ENCODE measurements at regions of chr22 and their contacts with region 1.

Region 1: GRCh38 chr22:23716811-23717801 is 26.3 kb downstream of the RGL4 start:
- DNase-seq: peak; percentile 93
- H3K4me3 ChIP-seq: peak overlapping the region; percentile 68 to 89 (median 79)
- H3K27ac ChIP-seq: peak overlapping the region; percentile 70 to 81 (median 78)
- H3K4me1 ChIP-seq: peaks cover 0 to 21% (median 14%) of the 10 kb centered on the region in 4 donors
- H3K27me3 ChIP-seq: no peaks in the 10 kb centered on the region
- CTCF ChIP-seq: no peak
- EP300 ChIP-seq: no peak
- POLR2A ChIP-seq: peak; percentile 47 to 77

Region 2: GRCh38 chr22:23742505-23743264 is 25.6 kb after region 1 on chr22:
- intact Hi-C with region 1: no loop called
- DNase-seq: no peak
- H3K4me3 ChIP-seq: no peak overlapping the region
- H3K27ac ChIP-seq: peak overlapping the region in 3 of 4 donors; percentile 1 to 26 (median 14)
- H3K4me1 ChIP-seq: no peaks in the 10 kb centered on the region
- H3K27me3 ChIP-seq: no peaks in the 10 kb centered on the region
- CTCF ChIP-seq: no peak
- EP300 ChIP-seq: no peak
- POLR2A ChIP-seq: no peak

Region 3: GRCh38 chr22:23826465-23827199 is 109.5 kb after region 1 on chr22:
- intact Hi-C with region 1: no loop called
- DNase-seq: peak; percentile 50
- H3K4me3 ChIP-seq: no peak overlapping the region
- H3K27ac ChIP-seq: no peak overlapping the region
- H3K4me1 ChIP-seq: no peaks in the 10 kb centered on the region
- H3K27me3 ChIP-seq: no peaks in the 10 kb centered on the region
- CTCF ChIP-seq: no peak
- EP300 ChIP-seq: no peak
- POLR2A ChIP-seq: no peak

Region 4: GRCh38 chr22:23857606-23858483 is 140.7 kb after region 1 on chr22 and contains the start of gene SLC2A11:
- intact Hi-C with region 1: loop called (anchors 5 kb)
- DNase-seq: peak; percentile 98
- H3K4me3 ChIP-seq: peak within 1 kb of the TSS; percentile 48 to 78 (median 62)
- H3K27ac ChIP-seq: peak within 1 kb of the TSS; percentile 94 to 99 (median 98)
- H3K4me1 ChIP-seq: peaks cover 0 to 22% (median 17%) of the 10 kb centered on the region in 4 donors
- H3K27me3 ChIP-seq: no peaks in the 10 kb centered on the region
- CTCF ChIP-seq: peak; percentile 4 to 60 (median 11)
- EP300 ChIP-seq: no peak
- POLR2A ChIP-seq: peak; percentile 83
- total RNA-seq, gene SLC2A11: 13.8 to 23.5 (median 16.4) TPM